Caki2 (cell line): ENCODE measurements at regions of chr1 and their contacts with region 1.

Region 1: GRCh38 chr1:209860293-209860881 is 32.6 kb downstream of the UTP25 start:
- DNase-seq: peak; percentile 47

Region 2: GRCh38 chr1:209956116-209956515 is 95.7 kb after region 1 on chr1:
- in situ Hi-C with region 1: no loop called
- DNase-seq: no peak

Region 3: DNA sequence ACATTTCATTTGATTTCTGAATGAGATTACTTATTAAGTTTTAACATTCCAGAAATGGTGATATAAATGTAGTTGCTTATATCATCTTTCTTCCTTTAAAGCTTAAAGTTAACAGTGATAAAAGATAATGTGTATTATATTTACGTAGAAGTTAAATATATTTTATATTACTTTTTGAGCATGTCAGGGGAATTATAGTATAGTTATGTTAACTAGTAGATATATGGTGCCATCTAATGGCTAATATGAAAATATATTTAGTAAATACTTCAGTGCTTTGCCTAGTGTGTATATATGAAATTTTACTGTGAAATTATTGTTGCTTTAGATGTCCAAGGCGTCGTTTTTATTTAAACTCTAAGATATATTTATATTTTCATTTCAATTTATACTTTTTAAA is 129.1 kb after region 1 on chr1:
- in situ Hi-C with region 1: loop called (anchors 25 kb)
- DNase-seq: no peak